Heart left ventricle (tissue), 16 donors: ENCODE measurements at regions of chr17 and their contacts with region 1.

Region 1: GRCh38 chr17:78697554-78698343 is 84.3 kb downstream of the CYTH1 start:
- DNase-seq: no peak
- ATAC-seq: peak in 2 of 4 donors; percentile 27 to 75
- H3K4me3 ChIP-seq: no peak overlapping the region
- H3K27ac ChIP-seq: no peak overlapping the region
- H3K4me1 ChIP-seq: peaks cover 0 to 15% (median 0%) of the 10 kb centered on the region in 12 donors
- H3K27me3 ChIP-seq: no peaks in the 10 kb centered on the region
- CTCF ChIP-seq: no peak
- POLR2A ChIP-seq: no peak

Region 2: DNA sequence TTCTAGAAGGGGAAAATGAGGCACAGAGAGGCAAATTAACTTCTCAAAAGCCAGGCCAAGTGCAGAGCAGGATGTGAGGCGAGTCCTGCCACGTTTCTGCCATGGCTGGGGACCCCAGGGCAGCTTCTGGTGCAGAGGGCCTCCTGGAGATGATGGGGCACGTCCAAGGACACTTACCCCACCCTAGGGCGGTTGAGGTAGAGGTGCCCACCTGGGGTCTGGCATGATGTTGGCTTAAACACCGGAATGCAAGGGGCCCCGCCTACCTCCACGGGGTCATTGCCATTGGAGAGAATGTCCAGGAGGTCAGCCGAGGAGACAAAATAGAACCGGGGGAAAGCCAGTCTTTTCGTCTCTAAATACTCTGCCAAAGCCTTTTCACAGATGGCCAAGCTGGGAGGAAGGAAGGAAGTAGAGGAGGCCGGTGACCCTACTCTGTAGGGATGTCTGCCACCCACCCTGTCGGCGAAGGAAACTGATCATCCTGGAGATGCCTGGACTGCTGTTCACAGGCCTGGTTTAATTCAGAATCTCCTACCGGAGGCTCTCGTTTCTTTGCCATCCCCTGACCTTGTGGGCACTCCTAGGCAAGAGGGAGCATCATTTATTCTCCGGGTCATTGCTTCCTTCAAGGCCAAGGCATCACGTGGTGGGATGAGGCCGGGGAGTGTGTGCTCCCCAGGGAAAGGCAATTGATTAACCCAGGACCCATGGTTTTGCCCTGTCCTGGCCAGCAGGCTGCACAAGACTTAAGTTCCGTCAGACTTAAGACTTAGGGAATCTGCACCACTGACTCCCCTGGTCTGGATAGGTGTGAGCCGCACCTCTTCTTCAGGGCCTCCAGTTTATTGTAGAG is 191.1 kb before region 1 on chr17:
- intact Hi-C with region 1: no loop called
- DNase-seq: peak in 1 of 5 donors; percentile 11
- ATAC-seq: peak in 2 of 4 donors; percentile 24 to 91
- H3K4me3 ChIP-seq: no peak overlapping the region
- H3K27ac ChIP-seq: no peak overlapping the region
- H3K4me1 ChIP-seq: peaks cover 0 to 7% (median 0%) of the 10 kb centered on the region in 12 donors
- H3K27me3 ChIP-seq: no peaks in the 10 kb centered on the region
- CTCF ChIP-seq: no peak
- POLR2A ChIP-seq: no peak

Region 3: DNA sequence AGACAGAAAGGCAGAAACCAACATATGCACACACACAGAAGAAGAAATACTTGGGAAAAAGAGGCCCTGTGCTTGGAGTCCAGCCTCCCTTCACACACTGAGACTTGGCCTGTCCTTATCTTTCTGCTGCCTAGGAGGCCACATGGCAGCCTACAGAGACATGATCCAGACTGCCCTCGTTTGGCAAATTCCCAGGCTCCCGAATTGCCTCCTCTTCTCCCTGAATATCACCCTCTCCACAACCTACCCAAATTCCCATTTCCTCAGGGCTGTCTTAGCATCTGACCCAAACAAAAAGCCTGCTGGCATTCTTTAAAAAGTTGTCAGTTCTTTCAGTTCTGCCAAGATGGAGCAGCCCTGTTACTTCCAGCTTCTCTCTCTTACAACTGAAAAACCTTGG is 180.3 kb before region 1 on chr17:
- intact Hi-C with region 1: loop called in 1 of 10 experiments (anchors 5 kb)
- DNase-seq: peak in 2 of 5 donors; percentile 39 to 66
- ATAC-seq: peak; percentile 71 to 87 (median 82)
- H3K4me3 ChIP-seq: no peak overlapping the region
- H3K27ac ChIP-seq: no peak overlapping the region
- H3K4me1 ChIP-seq: peaks cover 0 to 13% (median 0%) of the 10 kb centered on the region in 12 donors
- H3K27me3 ChIP-seq: no peaks in the 10 kb centered on the region
- CTCF ChIP-seq: no peak
- POLR2A ChIP-seq: no peak